ENCODE measurements at regions of chr12 and their contacts with region 1.

Region 1: DNA sequence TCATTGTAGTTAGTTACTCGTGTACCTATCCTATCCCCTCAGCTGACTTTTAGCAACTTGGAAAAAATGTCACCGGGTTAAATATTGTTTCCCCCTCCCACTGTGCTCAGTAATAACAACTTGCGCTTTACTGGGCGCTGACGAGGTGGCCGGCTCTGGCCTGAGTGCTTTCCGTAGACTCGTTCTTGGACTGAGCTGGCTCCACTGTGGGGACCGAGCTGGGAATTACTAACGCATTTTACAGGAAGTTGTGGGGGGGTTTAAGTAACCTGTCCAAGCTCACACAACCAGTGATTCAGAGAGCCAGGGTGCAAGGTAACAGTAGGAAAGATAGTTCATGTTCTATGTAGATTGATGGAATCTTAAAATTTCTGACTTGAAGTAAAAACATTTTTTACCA is 82.5 kb upstream of the KICS2 start:
- DNase-seq: no peak
- H3K4me3 ChIP-seq: no peak overlapping the region
- H3K27ac ChIP-seq: no peak overlapping the region
- H3K4me1 ChIP-seq: no peaks in the 10 kb centered on the region
- H3K27me3 ChIP-seq: no peaks in the 10 kb centered on the region
- CTCF ChIP-seq: no peak

Region 2: GRCh38 chr12:64273527-64274403 is 30.8 kb before region 1 on chr12:
- CTCF ChIA-PET with region 1: no interaction called
- POLR2A ChIA-PET with region 1: no interaction called
- intact Hi-C with region 1: no loop called
- DNase-seq: no peak
- H3K4me3 ChIP-seq: no peak overlapping the region
- H3K27ac ChIP-seq: no peak overlapping the region
- H3K4me1 ChIP-seq: no peaks in the 10 kb centered on the region
- H3K27me3 ChIP-seq: no peaks in the 10 kb centered on the region
- CTCF ChIP-seq: peak; percentile 43

Region 3: DNA sequence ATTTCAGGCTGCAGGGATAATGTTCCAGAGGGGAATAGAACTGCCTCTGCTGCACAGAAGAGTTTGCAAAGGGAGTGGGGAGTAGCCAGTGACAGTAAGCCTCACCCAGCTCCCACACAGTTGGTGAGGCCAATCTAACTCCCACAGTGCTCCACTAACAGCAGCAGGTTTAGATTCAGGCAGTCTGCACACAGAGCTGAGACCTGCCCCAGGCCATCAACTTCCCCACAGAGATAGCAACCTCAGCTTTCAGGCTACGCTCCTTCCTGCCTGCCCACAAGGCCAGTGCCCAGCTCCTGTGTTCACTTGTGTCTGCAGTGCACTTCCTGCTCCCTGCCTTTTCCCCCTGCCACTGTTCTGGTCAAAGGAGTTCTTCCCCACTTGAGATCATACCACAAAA is 627.4 kb after region 1 on chr12:
- CTCF ChIA-PET with region 1: no interaction called
- POLR2A ChIA-PET with region 1: no interaction called
- intact Hi-C with region 1: no loop called
- DNase-seq: no peak
- H3K4me3 ChIP-seq: no peak overlapping the region
- H3K27ac ChIP-seq: no peak overlapping the region
- H3K4me1 ChIP-seq: no peaks in the 10 kb centered on the region
- H3K27me3 ChIP-seq: no peaks in the 10 kb centered on the region
- CTCF ChIP-seq: no peak

Region 4: DNA sequence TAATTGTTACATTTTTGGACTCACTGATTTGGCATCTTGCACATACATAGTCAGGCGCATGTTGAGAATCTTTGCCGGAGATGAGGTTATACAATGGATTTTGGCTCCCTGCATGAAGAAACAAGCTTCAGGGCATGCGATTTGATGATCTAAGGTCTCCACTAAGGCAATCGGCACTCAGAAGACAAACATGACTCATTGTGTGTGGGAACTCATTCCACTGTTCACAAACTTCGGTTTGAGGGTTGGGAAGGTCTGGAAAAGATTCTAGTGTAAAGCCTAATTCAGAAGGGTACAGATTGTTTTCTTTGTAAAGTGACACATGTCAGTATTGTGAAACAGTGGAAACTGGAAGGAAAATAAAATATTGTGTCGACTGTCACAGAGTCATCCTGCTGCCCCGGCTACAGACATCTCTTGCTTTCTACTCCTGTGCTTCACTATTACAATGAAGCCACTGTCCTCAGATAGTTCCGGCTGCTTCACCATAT is 1327.1 kb after region 1 on chr12:
- CTCF ChIA-PET with region 1: no interaction called
- POLR2A ChIA-PET with region 1: interaction called, 22 read pairs
- intact Hi-C with region 1: no loop called
- DNase-seq: peak; percentile 66 to 100
- H3K4me3 ChIP-seq: peak overlapping the region; percentile 16; the same call in 1 of the 2 replicates
- H3K27ac ChIP-seq: peak overlapping the region; percentile 99
- H3K4me1 ChIP-seq: peaks cover 72% of the 10 kb centered on the region
- H3K27me3 ChIP-seq: no peaks in the 10 kb centered on the region
- CTCF ChIP-seq: no peak

Measured in PC-9 (cell line).